Left ventricle myocardium superior (tissue), 1 donor: ENCODE measurements at regions of chr4 and their contacts with region 1.

Region 1: DNA sequence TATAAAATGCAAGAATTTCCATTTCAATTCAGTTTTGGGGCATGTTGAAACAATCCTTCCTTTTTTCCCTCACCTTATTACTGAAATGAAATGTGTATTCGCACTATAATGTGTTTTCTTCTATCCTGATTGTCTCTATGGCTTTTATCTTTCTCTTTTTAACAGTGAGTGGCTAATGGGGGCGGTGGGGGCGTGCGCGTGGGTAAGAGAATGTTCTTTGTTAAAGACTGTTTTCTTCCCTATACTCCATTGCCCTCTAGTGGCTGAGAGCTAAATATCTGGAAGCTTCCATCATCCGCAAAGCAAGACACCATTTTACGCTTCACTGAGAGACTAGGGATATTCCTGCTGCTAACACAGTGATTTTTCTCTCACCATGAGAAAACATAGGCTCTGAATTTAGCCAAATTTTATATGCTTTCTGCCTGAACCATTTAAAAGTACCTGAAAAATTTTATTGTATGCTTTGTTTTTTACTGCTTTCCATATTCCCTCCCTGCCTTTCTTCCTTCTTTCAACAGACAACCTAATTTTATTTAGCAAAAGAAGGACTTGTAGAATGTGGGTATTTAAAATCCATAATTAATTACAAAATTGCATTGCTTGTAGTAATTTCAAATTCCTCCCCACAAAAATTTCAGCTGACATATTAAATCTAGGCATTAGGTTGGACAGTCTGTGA is 194.0 kb downstream of the GASK1B start:
- DNase-seq: peak; percentile 52
- ATAC-seq: peak; percentile 72

Region 2: DNA sequence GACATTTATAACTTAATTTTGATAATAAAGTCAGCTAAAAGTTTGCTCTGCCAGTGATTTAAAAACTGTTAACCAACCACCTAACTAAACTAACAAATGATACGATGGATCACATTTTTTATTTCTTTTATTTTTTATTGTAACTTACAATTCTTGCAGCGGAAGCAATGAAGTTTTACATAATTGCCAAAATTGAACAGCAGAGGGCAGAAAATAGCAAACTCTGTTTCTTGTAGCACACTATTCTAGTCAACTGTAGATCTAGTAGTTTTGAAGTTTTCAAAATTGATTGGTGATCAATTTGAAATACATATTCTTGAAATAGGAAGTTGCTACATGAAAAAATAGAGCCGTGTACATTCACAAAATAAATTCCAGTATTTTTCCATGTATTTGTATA is 761.1 kb before region 1 on chr4:
- intact Hi-C with region 1: loop called (anchors 10 kb)
- DNase-seq: no peak
- ATAC-seq: no peak

Region 3: GRCh38 chr4:157907226-157907946 is 71.4 kb before region 1 on chr4:
- intact Hi-C with region 1: no loop called
- DNase-seq: no peak
- ATAC-seq: no peak